ENCODE measurements at regions of chr11 and their contacts with region 1.

Region 1: DNA sequence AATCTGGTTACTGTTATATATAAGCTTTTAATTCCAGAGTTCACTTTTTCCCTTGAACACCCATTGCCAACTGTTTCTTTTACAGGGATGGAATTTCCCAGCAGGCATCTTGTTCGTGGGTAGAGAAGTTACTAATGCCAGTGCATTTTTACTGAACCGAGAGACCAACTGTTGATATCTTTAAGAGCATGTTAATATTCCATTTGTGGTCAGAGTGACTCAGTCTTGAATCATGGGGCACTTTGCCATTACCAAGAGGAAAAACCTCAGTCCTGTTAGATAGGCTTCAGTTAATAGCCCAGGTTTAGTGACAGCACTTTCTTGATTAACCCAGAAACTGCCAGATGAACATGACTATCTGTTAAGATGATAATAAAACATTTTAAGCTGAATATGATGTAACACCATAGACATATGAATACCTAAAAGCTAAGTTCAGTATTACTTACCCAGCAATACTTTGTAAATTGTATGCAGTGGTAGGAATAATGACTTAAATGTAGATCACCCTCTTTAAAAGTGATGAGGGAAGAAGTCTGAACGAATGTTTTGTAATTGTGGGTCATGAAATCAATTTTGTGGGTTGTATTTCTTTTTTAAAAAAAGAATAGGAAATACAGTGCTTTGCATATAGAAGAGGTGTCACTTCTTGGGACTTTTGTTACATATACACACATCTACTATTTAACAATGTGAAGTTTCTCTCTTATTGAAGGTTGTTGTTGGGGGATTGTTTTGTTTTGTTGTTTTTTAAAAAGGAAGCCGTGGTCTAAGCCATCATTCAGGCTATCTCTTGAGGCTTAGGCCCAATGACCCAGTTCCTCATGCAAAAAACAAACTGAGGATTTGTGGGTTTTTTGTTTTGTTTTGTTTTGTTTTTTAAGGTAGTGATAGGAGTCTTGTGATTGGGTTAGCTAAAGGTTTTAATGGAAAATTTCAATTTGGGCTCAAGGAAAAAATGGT is 79.2 kb upstream of the GRIK4 start:
- DNase-seq: peak; percentile 100
- ATAC-seq: peak; percentile 94
- H3K4me3 ChIP-seq: no peak overlapping the region
- H3K27ac ChIP-seq: peak overlapping the region; percentile 91
- H3K4me1 ChIP-seq: peaks cover 7% of the 10 kb centered on the region
- H3K27me3 ChIP-seq: no peaks in the 10 kb centered on the region
- CTCF ChIP-seq: no peak
- POLR2A ChIP-seq: peak; percentile 31; the same call in 1 of the 2 replicates
- RAD21 ChIP-seq: peak; percentile 29; the same call in 1 of the 2 replicates

Region 2: GRCh38 chr11:120471131-120471530 is 38.8 kb after region 1 on chr11:
- CTCF ChIA-PET with region 1: no interaction called
- POLR2A ChIA-PET with region 1: no interaction called
- dilution Hi-C with region 1: no loop called
- in situ Hi-C with region 1: no loop called
- intact Hi-C with region 1: loop called (anchors 5 kb)
- DNase-seq: peak; percentile 89
- ATAC-seq: peak; percentile 93
- H3K4me3 ChIP-seq: no peak overlapping the region
- H3K27ac ChIP-seq: peak overlapping the region; percentile 97; the same call in 1 of the 2 replicates
- H3K4me1 ChIP-seq: peaks cover 7% of the 10 kb centered on the region; the same call in 1 of the 2 replicates
- H3K27me3 ChIP-seq: no peaks in the 10 kb centered on the region
- CTCF ChIP-seq: no peak
- POLR2A ChIP-seq: no peak
- RAD21 ChIP-seq: no peak